Activated CD4-positive, alpha-beta memory T cell treated with anti-CD3 and anti-CD28 coated beads, Interleukin-2, amount 10 ng/mL, durations not matched to agents 7 days and 5 days (primary cell): ENCODE measurements at regions of chr15 and their contacts with region 1.

Region 1: GRCh38 chr15:59492389-59493377 is 54.7 kb downstream of the FAM81A start:
- DNase-seq: peak; percentile 61
- H3K4me3 Mint-ChIP-seq: no peak overlapping the region
- H3K27ac Mint-ChIP-seq: no peak overlapping the region
- H3K4me1 Mint-ChIP-seq: peaks cover 1% of the 10 kb centered on the region
- H3K27me3 Mint-ChIP-seq: peaks cover 20% of the 10 kb centered on the region

Region 2: DNA sequence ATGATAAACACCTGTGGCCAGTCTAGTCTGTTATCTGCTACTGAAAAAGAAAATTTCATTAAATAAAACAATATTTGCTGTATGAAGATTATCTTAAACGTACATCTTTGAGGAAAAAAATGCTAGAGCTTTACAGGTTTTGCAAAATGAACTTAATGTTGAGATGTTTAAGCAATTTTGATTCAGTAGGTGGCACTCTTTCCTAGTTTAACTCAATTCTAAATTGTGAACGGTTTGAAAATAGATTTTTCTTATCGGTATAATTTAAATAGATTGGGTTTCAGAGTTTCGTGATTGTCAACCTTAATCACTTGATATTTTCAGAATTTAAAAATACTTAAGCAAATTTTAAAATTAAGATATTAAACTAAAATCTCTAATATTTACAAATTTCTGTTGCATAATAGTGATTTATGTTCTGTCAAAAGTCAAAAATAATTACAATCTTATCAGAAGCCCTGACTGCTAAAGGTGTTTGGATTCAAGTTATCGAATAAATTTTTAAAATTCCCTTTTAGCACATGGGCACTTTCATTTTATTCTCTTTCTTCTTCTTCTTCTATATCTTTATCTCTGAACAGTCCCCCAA is 512.2 kb before region 1 on chr15:
- CTCF ChIA-PET with region 1: interaction called, 15 read pairs
- POLR2A ChIA-PET with region 1: interaction called, 3 read pairs
- DNase-seq: no peak
- H3K4me3 Mint-ChIP-seq: no peak overlapping the region
- H3K27ac Mint-ChIP-seq: peak overlapping the region; percentile 8
- H3K4me1 Mint-ChIP-seq: peaks cover 46% of the 10 kb centered on the region
- H3K27me3 Mint-ChIP-seq: peaks cover 9% of the 10 kb centered on the region

Region 3: DNA sequence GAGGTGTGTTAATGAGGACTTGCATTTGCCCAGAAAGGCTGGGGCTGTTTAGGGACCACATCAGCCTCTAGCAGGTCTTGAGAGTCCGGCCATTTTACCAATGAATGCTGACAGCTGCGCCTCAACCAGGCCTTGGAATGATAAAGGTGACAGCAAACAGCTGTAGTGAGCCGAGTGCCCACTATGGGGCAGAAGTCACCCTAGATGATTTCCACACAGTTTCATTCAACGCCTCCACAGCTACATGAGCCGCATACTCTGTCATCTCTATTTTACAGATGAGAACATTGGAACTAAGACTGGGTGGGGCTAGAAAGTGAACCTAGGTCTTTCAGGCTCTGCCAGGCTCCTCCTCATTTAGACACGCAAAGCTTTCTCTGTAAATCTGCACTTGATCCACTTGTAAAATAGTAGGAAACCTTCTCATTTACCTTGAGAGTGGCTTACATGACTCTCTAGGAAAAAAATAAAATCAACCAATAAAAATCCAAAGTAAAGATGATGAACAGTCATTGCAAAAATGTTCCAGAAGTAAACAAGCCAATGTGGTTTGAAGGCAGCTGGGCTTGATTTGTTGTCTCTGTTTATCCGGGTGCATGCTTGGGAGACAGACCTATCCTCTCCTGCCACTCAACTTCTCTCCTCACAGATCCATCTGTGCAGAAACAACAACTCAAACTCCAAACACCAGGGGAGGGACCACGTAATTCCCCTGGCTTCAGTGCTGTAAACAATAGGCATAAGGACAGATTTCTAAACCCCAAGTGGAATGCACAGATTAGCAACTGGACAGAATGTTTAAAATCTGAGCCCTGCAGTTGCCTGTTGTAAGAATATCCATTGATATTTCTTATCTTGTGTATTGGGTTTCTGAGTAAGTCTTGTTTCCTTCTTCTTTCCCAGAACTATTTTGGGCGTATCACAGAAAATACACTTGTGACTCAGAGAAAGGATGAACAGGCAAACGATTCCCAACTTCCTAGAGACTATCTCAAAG is 317.6 kb before region 1 on chr15:
- CTCF ChIA-PET with region 1: interaction called, 18 read pairs
- POLR2A ChIA-PET with region 1: no interaction called
- DNase-seq: peak; percentile 59
- H3K4me3 Mint-ChIP-seq: no peak overlapping the region
- H3K27ac Mint-ChIP-seq: no peak overlapping the region
- H3K4me1 Mint-ChIP-seq: peaks cover 18% of the 10 kb centered on the region
- H3K27me3 Mint-ChIP-seq: peaks cover 7% of the 10 kb centered on the region